ENCODE measurements at regions of chr21 and their contacts with region 1.

Region 1: GRCh38 chr21:31781737-31782136 is 49.8 kb upstream of the SCAF4 start:
- DNase-seq: peak in 1 of 2 donors; percentile 39
- ATAC-seq: peak in 5 of 8 donors; percentile 39 to 65 (median 52)
- H3K4me3 ChIP-seq: no peak overlapping the region
- H3K27ac ChIP-seq: no peak overlapping the region
- H3K4me1 ChIP-seq: peaks cover 0 to 5% (median 0%) of the 10 kb centered on the region in 9 donors
- H3K27me3 ChIP-seq: no peaks in the 10 kb centered on the region
- CTCF ChIP-seq: no peak

Region 2: GRCh38 chr21:31830701-31831100 is 49.0 kb after region 1 on chr21:
- intact Hi-C with region 1: no loop called
- DNase-seq: no peak
- ATAC-seq: no peak
- H3K4me3 ChIP-seq: no peak overlapping the region
- H3K27ac ChIP-seq: no peak overlapping the region
- H3K4me1 ChIP-seq: no peaks in the 10 kb centered on the region
- H3K27me3 ChIP-seq: no peaks in the 10 kb centered on the region
- CTCF ChIP-seq: no peak

Region 3: DNA sequence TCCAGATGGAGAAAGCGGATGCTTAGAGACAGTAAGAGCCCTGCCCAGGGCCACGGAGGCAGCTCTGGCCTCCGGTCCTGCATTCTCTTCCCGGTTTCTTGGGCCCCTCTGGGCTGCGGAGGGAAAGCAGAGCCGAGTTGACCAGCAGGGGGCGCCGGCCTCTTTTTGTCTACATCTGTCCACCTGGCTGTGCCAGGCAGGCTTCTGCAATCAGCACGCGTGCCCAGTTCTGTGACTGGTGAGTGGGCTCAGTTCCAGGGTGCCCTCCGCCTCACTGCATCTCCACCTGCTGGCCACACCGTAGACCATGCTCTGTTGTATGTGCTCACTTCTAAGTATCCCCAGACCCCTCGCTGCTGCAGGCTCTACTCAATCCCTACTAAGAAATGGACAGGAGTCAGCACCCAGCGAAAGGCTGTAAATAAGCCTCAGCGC is 84.4 kb after region 1 on chr21:
- intact Hi-C with region 1: loop called in 2 of 10 experiments (anchors 5 to 10 kb)
- DNase-seq: peak; percentile 83 to 88
- ATAC-seq: peak; percentile 93 to 97 (median 96)
- H3K4me3 ChIP-seq: no peak overlapping the region
- H3K27ac ChIP-seq: no peak overlapping the region
- H3K4me1 ChIP-seq: peaks cover 0 to 9% (median 2%) of the 10 kb centered on the region in 9 donors
- H3K27me3 ChIP-seq: peaks cover 0 to 19% (median 9%) of the 10 kb centered on the region in 7 donors
- CTCF ChIP-seq: peak; percentile 72 to 95 (median 92)

Region 4: DNA sequence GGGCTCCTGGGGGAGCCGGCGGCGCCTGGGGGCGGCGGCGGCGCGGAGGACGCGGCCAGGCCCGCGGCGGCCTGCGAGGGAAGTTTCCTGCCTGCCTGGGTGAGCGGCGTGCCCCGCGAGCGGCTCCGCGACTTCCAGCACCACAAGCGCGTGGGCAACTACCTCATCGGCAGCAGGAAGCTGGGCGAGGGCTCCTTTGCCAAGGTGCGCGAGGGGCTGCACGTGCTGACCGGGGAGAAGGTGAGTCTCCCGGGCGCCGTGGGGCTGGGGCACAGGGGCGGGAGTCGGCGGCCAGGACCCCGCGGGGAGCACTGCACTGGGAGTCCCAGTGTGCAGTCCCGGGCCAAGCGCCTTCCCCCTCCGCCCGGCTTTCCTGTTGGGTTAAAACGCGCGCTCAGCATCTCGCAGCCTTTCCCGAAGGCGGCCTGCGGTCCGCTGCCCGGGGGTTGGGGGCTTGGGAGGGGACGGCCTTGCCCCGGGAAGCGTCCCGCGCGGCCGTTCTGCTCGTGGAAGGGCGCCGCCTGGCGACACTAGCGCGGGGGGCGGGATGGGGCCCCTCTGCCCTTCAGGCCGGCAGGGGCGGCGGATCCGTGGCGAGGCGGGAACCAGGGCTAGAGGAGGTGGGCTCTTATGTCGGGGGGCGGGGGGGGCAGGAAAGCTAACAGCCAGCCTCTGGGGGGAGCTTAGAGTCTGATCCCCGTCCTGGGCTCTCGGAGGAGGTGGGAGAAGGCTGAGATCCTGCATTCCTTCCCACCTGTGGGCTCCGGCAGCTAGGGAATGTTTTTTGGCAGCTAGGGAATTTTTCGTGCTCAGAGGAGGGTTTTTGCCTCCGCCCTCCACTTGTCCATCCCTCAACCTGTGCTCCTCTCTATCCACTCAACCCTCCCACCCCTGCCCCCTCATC is 92.2 kb after region 1 on chr21:
- intact Hi-C with region 1: loop called in 2 of 10 experiments (anchors 5 to 10 kb)
- DNase-seq: peak in 1 of 2 donors; percentile 60
- ATAC-seq: peak in 7 of 8 donors; percentile 50 to 61 (median 55)
- H3K4me3 ChIP-seq: peak overlapping the region; percentile 18 to 66 (median 58)
- H3K27ac ChIP-seq: no peak overlapping the region
- H3K4me1 ChIP-seq: peaks cover under 1 to 25% (median 13%) of the 10 kb centered on the region in 9 donors
- H3K27me3 ChIP-seq: peaks cover 0 to 73% (median 46%) of the 10 kb centered on the region in 7 donors
- CTCF ChIP-seq: peak in 8 of 9 donors; percentile 38 to 68 (median 61)

Measured in heart right ventricle (tissue), 16 donors.